ENCODE measurements at regions of chr2 and their contacts with region 1.

Region 1: DNA sequence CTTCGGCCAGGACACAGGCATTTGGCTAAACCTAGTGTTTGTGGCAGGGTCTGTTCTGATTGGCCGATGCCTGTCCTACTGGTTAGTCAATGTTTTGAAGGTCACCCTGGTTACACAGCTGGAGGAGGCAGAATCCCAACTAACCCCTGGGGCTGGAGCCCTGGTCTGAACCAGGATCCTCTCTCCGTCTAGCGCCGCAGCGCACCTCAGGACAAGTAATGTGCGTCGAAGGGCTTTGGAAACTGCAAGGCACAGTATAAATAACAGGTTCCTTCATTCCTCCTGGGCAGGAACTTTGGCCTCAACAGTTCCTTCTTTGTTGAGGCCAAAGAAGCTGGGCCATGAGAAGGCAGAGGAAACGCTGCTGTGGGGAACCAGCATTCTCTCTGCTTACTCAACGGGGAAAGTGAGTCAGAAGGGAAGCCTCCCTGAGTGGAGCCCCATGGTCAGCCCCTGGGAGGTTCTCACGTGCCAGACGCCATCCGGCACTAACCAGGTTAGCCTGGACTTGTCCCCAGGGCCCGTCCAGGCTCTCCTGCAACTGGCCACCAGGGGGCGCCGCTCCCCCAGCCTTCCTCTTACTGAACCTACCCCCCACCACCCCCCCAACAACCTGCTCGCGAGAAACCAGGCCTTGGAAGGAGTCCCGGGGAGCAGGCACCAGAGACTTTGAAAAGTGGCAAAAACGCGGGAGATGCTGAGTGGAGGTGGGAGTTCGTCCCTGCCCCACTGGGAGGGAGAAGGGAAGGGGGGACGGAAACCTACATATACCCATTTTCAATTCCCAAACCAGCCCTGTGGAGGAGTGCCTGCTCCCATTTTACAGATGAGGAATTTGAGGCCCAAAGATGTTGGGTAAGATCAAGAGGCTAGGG is 19.8 kb downstream of the TEX44 start:
- DNase-seq: peak; percentile 87
- H3K4me3 Mint-ChIP-seq: peak overlapping the region; percentile 82
- H3K27ac Mint-ChIP-seq: peak overlapping the region; percentile 98
- H3K4me1 Mint-ChIP-seq: peaks cover 41% of the 10 kb centered on the region
- H3K27me3 Mint-ChIP-seq: no peaks in the 10 kb centered on the region

Region 2: DNA sequence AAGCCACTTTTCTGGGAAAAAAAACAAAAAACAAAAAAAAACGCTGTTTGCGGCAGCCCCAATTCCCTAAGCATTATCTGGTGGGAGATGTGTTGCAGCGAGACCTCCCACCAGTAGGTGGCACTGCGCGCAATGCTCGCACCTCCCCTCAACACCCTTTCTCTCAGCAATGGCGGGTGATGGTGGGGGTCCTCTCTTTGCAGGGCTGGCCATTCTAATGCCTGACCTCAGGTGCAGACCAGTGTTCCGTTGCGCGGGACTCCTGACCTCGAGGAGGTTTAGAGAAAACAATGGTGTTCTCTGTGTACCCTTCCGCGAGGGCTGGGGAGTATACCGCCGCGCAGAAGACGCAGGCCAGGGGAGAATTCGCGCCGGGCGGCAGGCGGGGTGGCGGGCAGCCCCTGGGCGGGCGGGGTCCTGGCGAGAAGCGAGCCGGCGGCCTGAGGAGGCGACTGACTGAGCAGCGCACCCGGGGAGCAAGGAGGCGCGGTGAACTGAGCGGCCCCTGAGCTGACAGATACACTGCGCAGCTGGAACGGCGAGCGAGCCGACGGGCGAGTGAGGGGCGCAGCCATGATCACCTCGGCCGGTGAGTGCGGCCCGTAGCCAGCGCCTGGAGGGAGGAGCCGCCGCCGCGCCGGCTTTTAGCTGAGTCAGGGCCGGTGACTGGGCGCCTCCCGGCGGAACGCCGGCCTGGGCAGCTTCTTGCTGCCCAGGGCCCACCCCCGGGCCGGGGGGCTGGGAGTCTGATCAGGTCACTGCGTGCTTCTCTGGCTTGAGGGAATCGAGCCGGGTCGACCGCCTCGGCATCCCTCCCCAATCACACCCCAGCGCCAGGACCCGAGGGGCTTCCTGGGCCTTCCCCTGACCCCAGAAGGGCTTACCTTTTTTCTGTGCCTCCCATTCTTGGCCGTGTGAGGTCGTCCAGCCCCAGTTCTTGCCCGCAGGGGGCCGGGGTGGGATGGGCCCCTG is 555.7 kb before region 1 on chr2 and contains the start of gene PSMD1:
- intact Hi-C with region 1: loop called (anchors 10 kb)
- DNase-seq: peak; percentile 91
- H3K4me3 Mint-ChIP-seq: peak within 1 kb of the TSS; percentile 97
- H3K27ac Mint-ChIP-seq: peak within 1 kb of the TSS; percentile 100
- H3K4me1 Mint-ChIP-seq: peaks cover 48% of the 10 kb centered on the region
- H3K27me3 Mint-ChIP-seq: peaks cover 2% of the 10 kb centered on the region
- total RNA-seq, gene PSMD1: 180 and 194 TPM in 2 replicates

Region 3: DNA sequence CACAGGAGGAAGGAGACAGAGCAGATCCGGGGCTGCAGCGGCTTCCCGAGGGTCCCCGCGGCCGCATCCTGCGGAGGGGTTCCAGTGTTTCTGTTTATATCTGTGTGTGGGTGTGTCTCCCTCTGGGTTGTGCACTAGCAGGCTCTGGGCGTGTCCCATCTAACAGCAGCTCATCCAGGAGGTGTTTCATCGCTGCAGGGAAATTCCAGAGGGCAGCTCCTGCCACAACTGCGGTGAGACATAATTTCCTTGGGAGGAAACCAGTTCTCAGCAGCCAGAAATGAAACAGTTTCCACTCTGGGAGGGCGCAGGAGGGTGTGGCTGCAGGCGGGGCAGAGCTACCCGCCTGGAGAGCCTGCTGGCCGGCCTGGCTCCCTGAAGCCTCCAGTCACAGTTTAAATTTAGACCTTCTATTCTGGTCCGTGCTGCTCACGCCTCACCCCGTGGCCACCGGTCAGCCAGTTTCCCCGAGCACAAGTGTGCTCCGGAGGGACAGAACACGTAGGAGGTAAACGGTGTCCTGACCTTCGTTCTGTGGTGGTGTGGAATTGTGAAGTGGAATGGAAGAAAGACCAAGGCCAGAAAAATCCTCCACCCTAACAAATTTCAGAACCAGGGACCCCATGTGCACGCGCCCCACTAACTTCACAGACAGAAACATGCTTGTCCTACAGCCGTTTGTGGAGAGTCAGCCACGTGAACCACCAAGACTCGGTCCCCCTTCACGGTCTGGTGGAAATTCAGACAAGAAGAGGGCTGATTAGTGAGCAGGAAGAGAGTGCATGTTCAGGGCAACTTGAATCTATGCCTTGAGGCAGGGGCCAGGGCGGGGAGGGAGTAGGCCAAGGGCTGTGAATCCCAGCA is 30.4 kb after region 1 on chr2:
- intact Hi-C with region 1: loop called (anchors 1 kb)
- DNase-seq: peak; percentile 68
- H3K4me3 Mint-ChIP-seq: peak overlapping the region; percentile 68
- H3K27ac Mint-ChIP-seq: peak overlapping the region; percentile 91
- H3K4me1 Mint-ChIP-seq: peaks cover 14% of the 10 kb centered on the region
- H3K27me3 Mint-ChIP-seq: no peaks in the 10 kb centered on the region

Region 4: GRCh38 chr2:231674587-231675338 is 62.3 kb after region 1 on chr2:
- intact Hi-C with region 1: loop called (anchors 1 kb)
- DNase-seq: peak; percentile 52
- H3K4me3 Mint-ChIP-seq: no peak overlapping the region
- H3K27ac Mint-ChIP-seq: peak overlapping the region; percentile 65
- H3K4me1 Mint-ChIP-seq: peaks cover 16% of the 10 kb centered on the region
- H3K27me3 Mint-ChIP-seq: no peaks in the 10 kb centered on the region

Region 5: DNA sequence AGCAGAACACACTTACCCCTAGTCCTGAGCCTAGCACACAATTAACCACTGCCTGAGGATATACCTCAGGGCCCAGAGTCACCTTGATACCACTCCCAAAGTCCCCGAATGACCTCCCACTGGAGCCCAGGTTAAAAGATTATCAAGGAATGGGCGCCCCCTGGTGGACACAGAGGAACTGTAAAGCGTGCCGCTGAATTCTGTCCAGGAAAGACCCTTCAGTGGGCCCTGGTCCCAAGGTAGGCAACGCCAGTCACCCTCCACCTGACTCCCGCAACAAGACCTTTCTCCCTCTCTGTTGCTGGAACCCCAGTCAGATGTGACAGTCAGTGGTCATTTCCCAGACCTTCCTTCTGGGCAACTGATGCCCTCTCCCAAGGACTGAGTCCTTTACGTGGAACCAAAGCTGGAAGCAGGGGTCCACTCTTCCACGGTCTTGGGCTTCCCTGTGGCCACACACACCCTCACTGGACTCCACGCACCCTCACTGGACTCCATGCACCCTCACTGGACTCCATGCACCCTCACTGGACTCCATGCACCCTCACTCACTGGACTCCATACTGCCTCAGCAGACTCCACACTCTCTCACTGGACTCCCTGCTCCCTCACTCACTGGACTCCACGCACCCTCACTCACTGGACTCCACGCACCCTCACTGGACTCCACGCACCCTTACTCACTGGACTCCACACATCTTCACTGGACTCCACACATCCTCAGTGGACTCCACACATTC is 103.0 kb after region 1 on chr2:
- intact Hi-C with region 1: loop called (anchors 1 kb)
- DNase-seq: peak; percentile 70
- H3K4me3 Mint-ChIP-seq: no peak overlapping the region
- H3K27ac Mint-ChIP-seq: peak overlapping the region; percentile 95
- H3K4me1 Mint-ChIP-seq: peaks cover 34% of the 10 kb centered on the region
- H3K27me3 Mint-ChIP-seq: no peaks in the 10 kb centered on the region

Measured in activated T-helper 2 cell treated with anti-CD3 and anti-CD28 coated beads, Interferon-gamma antibody, Interleukin-2, Interleukin-4, amounts not matched to agents 10 μg/mL and 5 μg/mL and 100 μg/mL, durations not matched to agents 14 hours and 24 hours and 36 hours (primary cell).